HepG2 (cell line): ENCODE measurements at regions of chr2 and their contacts with region 1.

Region 1: GRCh38 chr2:110853507-110853906 is 121.1 kb downstream of the ACOXL start:
- DNase-seq: peak; percentile 42
- ATAC-seq: peak; percentile 89
- H3K4me3 ChIP-seq: no peak overlapping the region
- H3K27ac ChIP-seq: no peak overlapping the region
- H3K4me1 ChIP-seq: peaks cover 6% of the 10 kb centered on the region; the same call in 1 of the 2 replicates
- H3K27me3 ChIP-seq: peaks cover 1 to 41% of the 10 kb centered on the region in 2 experiments; a peak in 3 of 5 replicates
- CTCF ChIP-seq: peak; percentile 62
- EP300 ChIP-seq: no peak
- POLR2A ChIP-seq: no peak
- RAD21 ChIP-seq: no peak

Region 2: GRCh38 chr2:110837446-110838405 is 15.8 kb before region 1 on chr2:
- CTCF ChIA-PET with region 1: no interaction called
- POLR2A ChIA-PET with region 1: no interaction called
- in situ Hi-C with region 1: no loop called
- intact Hi-C with region 1: no loop called
- DNase-seq: no peak
- ATAC-seq: no peak
- H3K4me3 ChIP-seq: no peak overlapping the region
- H3K27ac ChIP-seq: no peak overlapping the region
- H3K4me1 ChIP-seq: no peaks in the 10 kb centered on the region
- H3K27me3 ChIP-seq: peaks cover 1 to 30% of the 10 kb centered on the region in 2 experiments; a peak in 4 of 5 replicates
- CTCF ChIP-seq: no peak
- EP300 ChIP-seq: no peak
- POLR2A ChIP-seq: no peak
- RAD21 ChIP-seq: no peak

Region 3: DNA sequence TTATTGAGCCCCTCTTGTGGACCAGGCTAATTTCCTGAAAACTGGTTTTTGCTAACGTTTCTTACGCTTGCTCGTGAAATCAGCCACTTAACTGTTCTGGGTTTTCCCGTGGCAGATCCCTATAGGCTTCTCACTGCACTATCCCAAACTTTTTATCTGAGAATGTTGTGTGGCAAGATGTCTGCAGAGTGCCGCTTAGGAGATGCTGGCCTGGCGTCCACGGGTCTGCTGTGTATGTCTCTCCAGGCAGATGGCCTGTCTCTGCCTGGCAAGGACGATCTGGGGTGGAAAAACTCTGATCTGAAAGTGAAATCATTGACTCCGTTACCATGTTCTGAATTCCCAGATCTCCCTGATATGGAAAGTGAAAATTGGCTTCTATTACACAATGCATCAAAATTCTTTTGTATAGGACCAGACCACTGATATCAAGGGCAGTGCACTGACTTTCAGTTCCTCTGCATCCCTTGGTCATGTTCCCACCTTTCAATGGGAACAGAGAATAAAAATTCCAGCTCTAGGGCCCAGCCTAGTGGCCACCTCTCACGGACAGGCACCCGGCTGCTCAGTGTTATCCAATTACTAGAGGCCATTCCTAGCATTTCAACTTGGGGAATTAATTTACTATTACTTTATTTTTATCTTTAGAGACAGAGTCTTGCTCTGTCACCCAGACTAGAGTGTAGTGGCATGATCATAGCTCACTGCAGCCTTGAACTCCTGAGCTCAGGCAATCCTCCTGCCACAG is 33.5 kb after region 1 on chr2:
- CTCF ChIA-PET with region 1: no interaction called
- POLR2A ChIA-PET with region 1: no interaction called
- in situ Hi-C with region 1: no loop called
- intact Hi-C with region 1: loop called (anchors 5 kb)
- DNase-seq: no peak
- ATAC-seq: peak; percentile 41; the same call in 2 of the 3 replicates
- H3K4me3 ChIP-seq: no peak overlapping the region
- H3K27ac ChIP-seq: no peak overlapping the region
- H3K4me1 ChIP-seq: no peaks in the 10 kb centered on the region
- H3K27me3 ChIP-seq: no peaks in the 10 kb centered on the region
- CTCF ChIP-seq: no peak
- EP300 ChIP-seq: no peak
- POLR2A ChIP-seq: no peak
- RAD21 ChIP-seq: no peak